SK-N-SH (cell line): ENCODE measurements at regions of chr11 and their contacts with region 1.

Region 1: DNA sequence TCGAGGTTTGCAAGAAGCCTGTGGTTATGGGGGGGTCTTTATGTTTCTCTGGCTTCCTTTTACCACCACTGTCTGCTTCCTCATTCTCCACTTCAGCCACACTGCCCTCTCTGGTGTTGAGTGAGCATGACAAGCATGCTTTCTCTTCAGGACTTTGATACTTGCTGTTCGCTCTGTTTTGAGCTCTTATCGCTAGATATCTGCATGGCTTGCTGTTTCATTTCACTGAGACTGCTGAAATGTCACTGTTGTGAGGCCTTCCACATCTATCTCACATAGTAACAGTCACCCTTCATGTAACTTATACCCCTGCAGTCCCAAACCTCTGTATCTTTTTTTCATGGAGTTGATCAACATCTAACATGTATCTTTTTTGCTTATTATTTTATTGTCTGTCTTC is 59.8 kb downstream of the TMEM135 start:
- DNase-seq: peak; percentile 69
- H3K4me3 ChIP-seq: peak overlapping the region in 1 of 2 experiments; percentile 2; a peak in 1 of 4 replicates
- H3K27ac ChIP-seq: peak overlapping the region in 1 of 2 experiments; percentile 53; a peak in 2 of 4 replicates
- H3K4me1 ChIP-seq: peaks cover 0 to 8% of the 10 kb centered on the region in 2 experiments; a peak in 2 of 4 replicates
- H3K27me3 ChIP-seq: no peaks in the 10 kb centered on the region
- CTCF ChIP-seq: peak; percentile 67
- EP300 ChIP-seq: peak in 1 of 2 experiments; percentile 59; a peak in 1 of 4 replicates
- RAD21 ChIP-seq: peak; percentile 66

Region 2: DNA sequence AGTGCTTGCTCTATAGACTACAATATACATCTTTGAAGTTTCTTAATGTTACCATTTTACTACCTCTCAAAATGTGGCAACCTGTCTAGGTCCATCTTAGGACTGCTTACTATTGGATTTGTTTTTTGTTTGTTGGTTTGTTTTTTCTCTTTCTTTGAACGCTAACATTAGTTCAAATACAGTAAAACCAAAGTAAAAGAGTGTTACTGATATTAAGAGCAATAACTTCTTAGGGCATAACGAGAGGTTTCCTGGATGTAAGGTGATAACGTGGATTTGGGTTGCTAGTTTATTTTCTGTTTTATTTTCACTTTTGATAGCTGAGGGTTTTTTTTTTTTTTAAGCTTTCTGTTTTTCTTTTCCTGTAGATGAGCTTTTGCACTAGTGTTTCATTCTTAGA is 16.2 kb before region 1 on chr11:
- CTCF ChIA-PET with region 1: interaction called, 16 read pairs
- POLR2A ChIA-PET with region 1: no interaction called
- DNase-seq: no peak
- H3K4me3 ChIP-seq: no peak overlapping the region
- H3K27ac ChIP-seq: no peak overlapping the region
- H3K4me1 ChIP-seq: peaks cover 0 to 18% of the 10 kb centered on the region in 2 experiments; a peak in 1 of 4 replicates
- H3K27me3 ChIP-seq: no peaks in the 10 kb centered on the region
- CTCF ChIP-seq: no peak
- EP300 ChIP-seq: no peak
- RAD21 ChIP-seq: no peak

Region 3: DNA sequence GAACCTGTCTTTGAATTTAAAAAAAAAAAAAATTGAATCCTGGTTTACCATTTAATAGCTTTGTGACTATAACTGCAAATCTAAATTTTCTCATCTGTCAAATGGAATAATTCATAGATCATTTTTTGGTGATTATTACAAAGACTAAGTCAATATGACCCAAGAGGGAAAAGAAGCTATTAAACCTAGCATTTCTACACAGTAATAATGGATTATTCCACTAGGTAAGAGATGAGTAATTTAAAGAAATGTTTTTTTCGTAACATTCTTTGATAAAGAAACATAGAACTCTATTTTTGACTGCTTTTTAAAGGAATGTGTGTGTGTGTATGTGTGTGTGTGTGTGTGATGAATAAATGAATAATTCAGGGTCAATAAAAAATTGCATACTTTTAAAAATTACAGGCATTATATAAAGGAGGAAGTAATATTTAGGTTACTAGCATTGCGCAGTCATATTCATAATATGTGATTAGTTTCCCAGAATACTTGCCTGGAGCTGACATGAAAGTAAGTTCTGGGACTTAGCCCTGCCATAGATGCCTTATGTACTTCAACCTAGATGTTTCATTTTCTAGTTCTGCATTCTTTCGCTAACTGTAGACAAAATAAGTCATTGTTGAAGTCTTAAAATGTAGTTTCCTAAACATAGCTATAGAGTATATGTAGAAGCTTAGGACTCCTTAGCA is 13.0 kb after region 1 on chr11:
- CTCF ChIA-PET with region 1: interaction called, 18 read pairs
- POLR2A ChIA-PET with region 1: no interaction called
- DNase-seq: no peak
- H3K4me3 ChIP-seq: no peak overlapping the region
- H3K27ac ChIP-seq: no peak overlapping the region
- H3K4me1 ChIP-seq: peaks cover 4 to 5% of the 10 kb centered on the region in 2 experiments; a peak in 3 of 4 replicates
- H3K27me3 ChIP-seq: no peaks in the 10 kb centered on the region
- CTCF ChIP-seq: no peak
- EP300 ChIP-seq: no peak
- RAD21 ChIP-seq: no peak